HEK293 (cell line): ENCODE measurements at regions of chr5 and their contacts with region 1.

Region 1: DNA sequence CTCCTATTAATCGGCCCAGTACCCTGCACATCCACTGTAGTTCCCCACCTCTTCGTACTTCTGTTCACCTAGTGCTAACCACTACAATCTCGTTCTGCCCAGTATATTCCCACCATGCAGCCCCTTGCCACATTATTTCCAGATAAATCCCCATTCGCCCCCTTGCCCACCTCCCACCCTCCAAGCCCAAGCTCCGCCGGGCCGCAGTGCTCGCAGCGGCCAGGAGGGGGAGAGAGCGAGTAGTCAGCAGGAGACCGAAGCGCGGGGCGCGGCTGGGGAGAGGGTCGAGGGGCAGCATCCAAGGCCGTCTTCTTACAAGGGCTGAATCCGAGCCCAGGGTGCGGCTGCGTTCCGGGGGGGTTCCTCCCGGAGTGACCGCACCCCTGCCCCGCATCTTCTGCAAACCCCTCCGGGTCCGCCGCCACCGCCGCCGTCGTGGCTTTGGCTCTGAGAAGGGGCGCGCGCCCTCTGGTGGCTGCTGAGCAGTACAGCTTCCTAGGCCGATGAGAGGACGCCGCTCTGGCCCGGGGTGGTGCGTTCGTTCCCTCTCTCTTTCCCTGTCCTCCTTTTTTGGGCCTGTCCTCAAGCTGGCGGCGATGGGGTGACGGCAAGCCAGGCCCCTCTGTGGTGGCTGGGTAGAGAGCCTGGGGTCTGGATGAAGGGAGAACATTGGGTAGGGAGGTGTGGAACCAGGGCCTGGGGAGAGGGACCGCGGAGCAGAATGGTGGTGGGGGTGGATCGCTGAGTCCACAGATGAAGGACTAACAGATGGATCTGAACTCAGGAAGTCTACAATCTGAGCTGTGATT is 30.0 kb upstream of the PSD2 start:
- H3K4me3 ChIP-seq: peak overlapping the region; percentile 51
- H3K27ac ChIP-seq: no peak overlapping the region; the same call in 1 of the 2 replicates
- H3K4me1 ChIP-seq: no peaks in the 10 kb centered on the region
- CTCF ChIP-seq: peak; percentile 99

Region 2: GRCh38 chr5:139422307-139422893 is 343.2 kb before region 1 on chr5:
- CTCF ChIA-PET with region 1: interaction called, 15 read pairs
- POLR2A ChIA-PET with region 1: no interaction called
- H3K4me3 ChIP-seq: no peak overlapping the region
- H3K27ac ChIP-seq: no peak overlapping the region
- H3K4me1 ChIP-seq: no peaks in the 10 kb centered on the region
- CTCF ChIP-seq: peak; percentile 70

Region 3: GRCh38 chr5:139648205-139649081 is 117.2 kb before region 1 on chr5 and contains the start of gene CXXC5:
- CTCF ChIA-PET with region 1: interaction called, 11 read pairs
- POLR2A ChIA-PET with region 1: interaction called, 3 read pairs
- H3K4me3 ChIP-seq: peak within 1 kb of the TSS; percentile 79
- H3K27ac ChIP-seq: peak within 1 kb of the TSS; percentile 82; the same call in 1 of the 2 replicates
- H3K4me1 ChIP-seq: peaks cover 28% of the 10 kb centered on the region
- CTCF ChIP-seq: no peak

Region 4: GRCh38 chr5:139690064-139690802 is 75.4 kb before region 1 on chr5:
- CTCF ChIA-PET with region 1: interaction called, 15 read pairs
- POLR2A ChIA-PET with region 1: no interaction called
- H3K4me3 ChIP-seq: no peak overlapping the region
- H3K27ac ChIP-seq: no peak overlapping the region
- H3K4me1 ChIP-seq: no peaks in the 10 kb centered on the region
- CTCF ChIP-seq: 0 out of 2 replicates have a peak, but pooled peaks have one; percentile 14

Region 5: GRCh38 chr5:139740138-139740991 is 25.2 kb before region 1 on chr5:
- CTCF ChIA-PET with region 1: interaction called, 14 read pairs
- POLR2A ChIA-PET with region 1: no interaction called
- H3K4me3 ChIP-seq: no peak overlapping the region
- H3K27ac ChIP-seq: peak overlapping the region; percentile 79; the same call in 1 of the 2 replicates
- H3K4me1 ChIP-seq: peaks cover 16% of the 10 kb centered on the region
- CTCF ChIP-seq: no peak

Region 6: DNA sequence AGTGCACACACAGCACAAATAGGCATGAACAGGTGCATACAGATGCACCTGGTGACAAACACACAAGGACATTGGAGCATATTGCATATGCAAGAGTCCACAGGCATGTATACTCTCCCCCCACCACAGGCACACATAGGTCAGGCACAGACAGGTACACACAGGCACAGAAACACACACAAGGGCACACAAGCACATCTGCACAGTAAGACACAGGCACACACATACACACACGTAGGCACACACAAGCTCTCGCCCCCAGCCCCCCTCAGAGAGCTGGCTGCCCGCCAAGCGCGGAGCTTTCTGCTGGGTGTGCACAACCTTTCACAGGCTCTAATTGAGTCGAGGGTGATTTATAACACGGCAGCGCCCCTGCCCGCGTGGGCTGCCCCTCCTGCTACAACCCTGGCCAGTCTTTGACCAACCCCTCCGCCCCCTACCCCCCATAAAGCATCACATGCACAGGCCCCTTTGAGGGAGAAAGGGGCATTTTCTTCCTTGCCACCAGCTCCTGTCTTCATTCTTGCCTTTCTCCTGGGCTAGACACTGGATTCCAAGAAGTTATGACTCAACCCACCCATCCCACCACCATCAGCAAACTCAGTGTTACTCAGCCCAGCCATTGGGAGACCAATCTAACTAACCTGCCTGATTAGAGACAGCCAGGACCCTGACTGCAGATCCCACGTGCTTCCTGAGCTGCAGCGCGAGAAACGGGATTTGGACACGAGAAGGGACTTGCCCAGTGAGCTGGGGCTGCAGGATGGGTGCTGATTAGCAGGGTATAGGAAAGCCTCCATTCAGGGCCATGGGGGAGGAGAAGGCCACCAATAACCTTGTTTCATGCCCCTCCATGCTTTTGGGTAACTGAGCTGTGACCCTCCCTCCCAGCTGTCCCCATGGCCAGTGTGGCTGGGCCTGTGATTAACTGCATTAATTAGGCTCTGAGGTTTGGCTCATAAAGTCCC is 12.8 kb before region 1 on chr5:
- CTCF ChIA-PET with region 1: interaction called, 27 read pairs
- POLR2A ChIA-PET with region 1: interaction called, 3 read pairs
- H3K4me3 ChIP-seq: no peak overlapping the region
- H3K27ac ChIP-seq: no peak overlapping the region; the same call in 1 of the 2 replicates
- H3K4me1 ChIP-seq: peaks cover 6% of the 10 kb centered on the region
- CTCF ChIP-seq: no peak

Region 7: DNA sequence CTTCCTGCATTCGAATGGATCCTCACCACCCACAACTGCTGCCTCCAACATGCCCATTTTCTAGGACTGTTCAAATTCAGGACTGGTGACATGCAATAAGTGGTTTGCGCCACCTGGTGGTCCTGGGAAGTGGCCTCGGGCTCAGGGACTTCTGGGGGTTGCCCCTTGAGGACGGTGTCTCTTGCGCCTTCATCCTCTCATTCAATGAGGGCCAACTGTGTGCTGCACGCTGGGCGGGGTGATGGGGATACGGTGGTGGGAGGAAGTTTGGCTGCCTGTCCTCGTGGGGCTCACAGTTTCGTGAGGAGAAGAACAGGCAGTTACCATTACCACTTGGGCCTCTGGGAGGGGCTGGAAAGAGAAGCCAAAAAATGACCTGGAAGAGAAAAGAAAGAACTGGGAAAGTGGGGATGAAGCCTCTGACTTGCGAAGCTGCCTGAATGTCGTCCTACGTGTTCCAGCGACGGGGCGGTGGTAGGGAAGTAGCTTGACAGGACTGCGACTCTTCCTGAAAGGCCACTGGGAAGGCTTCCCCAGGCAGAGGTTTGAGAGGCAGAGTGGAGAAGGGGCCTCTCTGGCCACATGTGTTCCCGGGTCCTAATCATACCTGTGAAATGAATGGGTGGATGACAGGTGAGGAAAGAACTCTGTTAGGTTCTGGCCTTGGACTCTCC is 79.0 kb after region 1 on chr5:
- CTCF ChIA-PET with region 1: no interaction called
- POLR2A ChIA-PET with region 1: no interaction called
- H3K4me3 ChIP-seq: no peak overlapping the region
- H3K27ac ChIP-seq: no peak overlapping the region
- H3K4me1 ChIP-seq: no peaks in the 10 kb centered on the region
- CTCF ChIP-seq: peak; percentile 88